ENCODE measurements at regions of chr11 and their contacts with region 1.

Region 1: DNA sequence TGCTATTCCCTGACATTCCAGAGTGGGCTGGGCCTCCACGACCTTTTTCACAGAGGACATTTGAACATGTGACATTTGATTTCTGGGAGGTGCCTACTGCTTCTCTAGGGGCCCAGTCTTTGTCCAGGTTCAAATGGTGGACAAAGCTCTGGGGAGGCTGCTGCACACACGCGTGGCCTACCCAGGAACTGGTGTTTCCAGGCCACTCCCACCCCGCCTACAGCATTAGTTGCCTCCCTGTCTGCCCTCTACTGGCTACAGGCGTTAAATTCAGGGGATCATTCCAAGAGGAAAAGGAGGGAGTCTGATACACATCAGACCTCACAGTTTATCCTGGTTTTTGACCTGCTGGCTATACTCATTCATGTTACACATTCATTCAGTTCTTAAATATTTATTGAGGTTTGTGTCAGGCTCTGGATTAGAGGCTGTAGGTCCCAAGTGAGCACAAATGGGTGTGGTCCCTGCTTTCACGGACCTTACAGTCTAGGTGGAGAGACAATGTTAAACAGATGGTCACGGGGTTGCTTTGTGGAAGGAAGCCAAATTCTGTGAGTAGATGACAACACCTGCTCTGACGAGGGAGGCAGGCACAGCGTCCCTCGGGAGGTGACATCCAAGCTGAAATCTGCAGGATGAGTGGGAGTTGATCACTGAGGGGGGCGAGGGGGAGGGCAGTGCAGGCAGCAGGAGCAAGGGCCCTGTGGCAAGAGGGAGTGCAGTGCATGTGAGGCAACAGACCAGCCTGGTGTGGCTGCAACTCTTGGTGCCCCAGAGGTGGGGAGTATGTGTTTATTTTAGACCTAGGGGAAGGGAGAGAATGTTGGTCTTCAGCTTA is 11.8 kb downstream of the TUB start:
- DNase-seq: peak; percentile 79
- ATAC-seq: peak; percentile 73

Region 2: GRCh38 chr11:7904914-7905313 is 187.9 kb before region 1 on chr11:
- intact Hi-C with region 1: no loop called
- DNase-seq: no peak
- ATAC-seq: no peak

Region 3: DNA sequence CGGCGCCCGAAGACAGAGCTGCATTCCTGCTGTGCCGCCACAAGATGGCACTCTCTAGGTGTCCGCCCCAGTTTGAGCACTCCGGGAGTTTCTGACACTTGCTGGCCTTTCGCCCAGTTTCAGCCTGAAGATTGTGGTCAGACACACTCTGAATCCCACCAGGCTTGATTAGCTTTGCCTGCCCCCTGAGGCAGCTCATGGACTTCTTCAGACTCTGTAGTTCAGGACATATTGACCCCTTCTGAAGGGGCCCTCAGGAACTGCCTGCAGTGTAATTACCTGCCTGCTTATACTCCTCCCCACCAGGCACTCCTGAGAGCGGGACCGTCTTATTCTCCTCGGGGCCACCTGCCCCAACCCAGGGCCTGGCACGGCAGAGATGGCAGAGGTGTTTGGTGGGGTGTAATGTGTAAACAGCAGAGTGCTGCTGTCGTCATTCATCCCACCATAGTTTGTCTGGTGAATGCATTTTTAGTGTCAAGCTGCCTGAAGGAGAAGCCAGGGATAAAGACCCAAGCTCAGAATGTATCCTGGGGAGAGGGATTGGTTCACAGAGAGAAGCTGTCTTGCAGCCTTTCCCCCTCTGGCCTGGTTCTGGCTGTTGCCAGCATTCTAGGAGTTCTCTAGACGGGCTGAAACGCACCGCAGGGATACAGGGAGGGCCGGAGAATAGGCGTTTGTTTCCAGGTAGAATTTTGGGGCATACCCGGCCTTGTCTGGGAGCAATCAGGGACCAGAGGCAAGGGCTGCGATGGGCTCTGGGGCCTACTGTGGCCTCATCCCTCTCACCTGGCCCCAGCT is 59.3 kb before region 1 on chr11:
- intact Hi-C with region 1: loop called (anchors 5 kb)
- DNase-seq: peak; percentile 90
- ATAC-seq: peak; percentile 76

Measured in sciatic nerve (tissue), 2 donors.